K562 (cell line): ENCODE measurements at regions of chr7 and their contacts with region 1.

Region 1: GRCh38 chr7:31488562-31489203 is 25.2 kb upstream of the ITPRID1 start:
- DNase-seq: peak; percentile 74 to 88 (median 82)
- ATAC-seq: peak; percentile 99
- H3K4me3 ChIP-seq: no peak overlapping the region
- H3K27ac ChIP-seq: no peak overlapping the region
- H3K4me1 ChIP-seq: no peaks in the 10 kb centered on the region
- H3K27me3 ChIP-seq: no peaks in the 10 kb centered on the region
- CTCF ChIP-seq: peak; percentile 81 to 91 (median 84)
- EP300 ChIP-seq: no peak
- POLR2A ChIP-seq: no peak
- RAD21 ChIP-seq: peak; percentile 45 to 72

Region 2: DNA sequence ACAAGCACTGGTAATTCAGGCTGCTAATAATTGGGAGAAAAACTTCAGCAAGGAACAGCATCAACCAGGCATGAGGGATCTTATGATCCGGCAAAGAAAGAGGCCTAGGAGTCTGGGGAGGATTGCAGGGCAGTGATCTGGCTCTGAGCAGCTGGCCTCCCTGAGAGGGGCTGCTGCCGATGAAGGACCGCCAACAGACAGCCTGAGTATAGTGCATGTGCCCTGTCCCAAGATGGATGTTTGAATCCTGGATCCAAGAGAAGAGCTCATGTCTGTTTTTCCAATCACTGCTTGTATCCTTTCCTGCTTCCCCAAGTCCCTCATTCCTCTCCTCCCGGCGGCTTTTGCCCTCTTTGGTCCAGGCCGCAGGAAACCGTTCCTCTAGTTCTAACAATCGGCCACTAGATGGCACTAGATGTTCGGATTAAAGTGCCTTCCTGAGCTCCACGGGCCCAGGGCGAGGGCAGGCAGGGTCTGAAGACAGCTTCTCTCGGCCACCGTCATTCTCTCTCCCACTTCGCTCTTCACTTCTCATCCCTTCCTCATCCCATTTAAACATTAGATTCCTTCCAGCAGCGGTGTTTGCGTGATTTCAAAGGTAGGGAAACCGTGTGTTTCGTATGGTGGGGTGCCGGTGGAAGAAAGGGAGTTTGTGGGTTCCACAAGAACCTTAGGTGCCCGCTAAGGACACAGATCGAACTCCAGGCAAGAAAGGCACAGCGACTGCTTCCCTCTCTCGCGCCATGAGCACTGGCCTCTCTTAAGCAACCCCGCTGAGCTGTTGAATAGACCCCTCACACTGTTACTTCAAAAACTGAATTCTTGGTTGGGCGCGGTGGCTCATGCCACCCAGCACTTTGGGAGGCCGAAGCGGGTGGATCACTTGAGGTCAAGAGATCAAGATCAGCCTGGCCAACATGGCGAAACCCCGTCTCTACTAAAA is 354.2 kb before region 1 on chr7:
- CTCF ChIA-PET with region 1: interaction called, 10 read pairs
- POLR2A ChIA-PET with region 1: no interaction called
- in situ Hi-C with region 1: loop called (anchors 25 kb)
- intact Hi-C with region 1: loop called (anchors 2 kb)
- DNase-seq: peak; percentile 69 to 82 (median 74)
- ATAC-seq: peak; percentile 99
- H3K4me3 ChIP-seq: no peak overlapping the region
- H3K27ac ChIP-seq: no peak overlapping the region
- H3K4me1 ChIP-seq: no peaks in the 10 kb centered on the region
- H3K27me3 ChIP-seq: peaks cover 0 to 4% of the 10 kb centered on the region in 2 experiments; a peak in 3 of 5 replicates
- CTCF ChIP-seq: peak; percentile 69 to 80 (median 78)
- EP300 ChIP-seq: no peak
- POLR2A ChIP-seq: no peak
- RAD21 ChIP-seq: peak; percentile 51 to 76

Region 3: DNA sequence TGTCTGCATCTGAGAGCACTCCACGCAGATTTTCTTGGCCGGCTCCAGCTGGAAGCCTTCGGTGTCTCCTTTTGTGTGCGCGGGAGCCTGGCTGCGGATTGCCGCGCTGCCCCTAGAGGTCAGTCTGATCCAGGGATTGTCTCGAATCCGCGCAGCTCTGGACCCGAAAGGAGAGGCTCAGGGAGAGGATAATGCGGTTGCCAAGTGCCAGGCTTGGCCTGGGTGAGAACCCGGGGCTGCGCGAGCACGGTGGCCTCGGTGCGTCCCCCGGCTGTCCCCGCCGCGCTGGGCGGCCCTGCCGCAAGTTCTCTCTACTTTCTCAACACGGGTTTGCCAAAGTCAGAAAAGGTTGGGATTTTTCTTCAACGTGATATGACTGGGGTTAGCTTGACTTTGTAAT is 295.7 kb before region 1 on chr7:
- CTCF ChIA-PET with region 1: no interaction called
- POLR2A ChIA-PET with region 1: no interaction called
- in situ Hi-C with region 1: no loop called
- intact Hi-C with region 1: loop called (anchors 2 kb)
- DNase-seq: peak; percentile 53 to 63 (median 59)
- ATAC-seq: peak; percentile 100
- H3K4me3 ChIP-seq: no peak overlapping the region
- H3K27ac ChIP-seq: no peak overlapping the region
- H3K4me1 ChIP-seq: peaks cover 0 to 4% of the 10 kb centered on the region in 2 experiments; a peak in 1 of 5 replicates
- H3K27me3 ChIP-seq: no peaks in the 10 kb centered on the region
- CTCF ChIP-seq: peak; percentile 77 to 81 (median 81)
- EP300 ChIP-seq: no peak
- POLR2A ChIP-seq: no peak
- RAD21 ChIP-seq: peak; percentile 18 to 67; a peak in 3 of 4 replicates

Region 4: GRCh38 chr7:31340603-31341002 is 148.1 kb before region 1 on chr7 and contains the start of gene NEUROD6:
- CTCF ChIA-PET with region 1: no interaction called
- POLR2A ChIA-PET with region 1: no interaction called
- in situ Hi-C with region 1: no loop called
- intact Hi-C with region 1: no loop called
- DNase-seq: no peak
- ATAC-seq: no peak
- H3K4me3 ChIP-seq: no peak within 1 kb of the TSS
- H3K27ac ChIP-seq: no peak within 1 kb of the TSS
- H3K4me1 ChIP-seq: peaks cover 0 to 8% of the 10 kb centered on the region in 2 experiments; a peak in 1 of 5 replicates
- H3K27me3 ChIP-seq: peaks cover 2 to 22% of the 10 kb centered on the region in 2 experiments; a peak in 2 of 5 replicates
- CTCF ChIP-seq: no peak
- EP300 ChIP-seq: no peak
- POLR2A ChIP-seq: no peak
- RAD21 ChIP-seq: no peak
- polyA plus RNA-seq, gene NEUROD6: not detected

Region 5: DNA sequence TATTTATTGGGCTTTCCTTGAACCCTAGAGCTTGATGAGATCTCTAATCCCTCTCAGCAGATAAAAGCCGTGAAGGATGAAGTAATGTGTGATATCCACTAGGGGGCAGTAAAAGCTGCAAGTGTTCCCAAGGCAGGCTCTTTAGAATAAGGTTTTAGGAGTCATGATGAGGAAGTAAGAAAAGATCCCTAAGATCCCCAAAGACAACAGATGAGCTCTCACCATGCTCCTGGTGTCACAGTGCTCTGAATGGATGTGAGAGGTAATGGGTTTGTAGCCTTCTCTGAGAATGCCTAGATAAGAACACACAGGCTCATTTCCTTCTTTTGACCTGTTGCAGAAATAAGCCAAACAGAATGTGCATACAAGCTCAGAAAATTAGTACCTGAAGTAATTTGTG is 45.2 kb before region 1 on chr7:
- CTCF ChIA-PET with region 1: no interaction called
- POLR2A ChIA-PET with region 1: no interaction called
- in situ Hi-C with region 1: no loop called
- intact Hi-C with region 1: loop called (anchors 1 kb)
- DNase-seq: peak; percentile 53 to 63 (median 57)
- ATAC-seq: peak; percentile 89
- H3K4me3 ChIP-seq: no peak overlapping the region
- H3K27ac ChIP-seq: no peak overlapping the region
- H3K4me1 ChIP-seq: no peaks in the 10 kb centered on the region
- H3K27me3 ChIP-seq: no peaks in the 10 kb centered on the region
- CTCF ChIP-seq: peak; percentile 58 to 78 (median 76); a peak in 5 of 6 replicates
- EP300 ChIP-seq: no peak
- POLR2A ChIP-seq: no peak
- RAD21 ChIP-seq: peak; percentile 54 to 67

Region 6: DNA sequence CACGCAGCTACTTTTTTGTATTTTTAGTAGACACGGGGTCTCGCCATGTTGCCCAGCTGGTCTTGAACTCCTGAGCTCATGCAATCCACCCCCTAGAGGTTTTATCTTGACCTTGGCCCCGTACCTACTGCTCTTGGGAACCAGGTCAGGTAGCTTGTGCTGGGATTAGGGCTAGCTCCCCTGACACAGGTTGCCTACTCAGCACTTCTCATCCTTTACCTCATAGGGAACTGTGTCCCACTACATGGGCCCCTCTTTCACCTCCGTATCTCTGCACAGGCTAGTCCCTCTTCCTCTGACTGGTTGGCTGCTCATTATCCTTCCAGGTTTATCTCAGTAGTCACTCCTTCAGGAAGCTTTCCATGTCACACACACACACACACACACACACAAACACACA is 32.8 kb before region 1 on chr7:
- CTCF ChIA-PET with region 1: no interaction called
- POLR2A ChIA-PET with region 1: no interaction called
- in situ Hi-C with region 1: no loop called
- intact Hi-C with region 1: no loop called
- DNase-seq: no peak
- ATAC-seq: no peak
- H3K4me3 ChIP-seq: no peak overlapping the region
- H3K27ac ChIP-seq: no peak overlapping the region
- H3K4me1 ChIP-seq: no peaks in the 10 kb centered on the region
- H3K27me3 ChIP-seq: no peaks in the 10 kb centered on the region
- CTCF ChIP-seq: no peak
- EP300 ChIP-seq: no peak
- POLR2A ChIP-seq: no peak
- RAD21 ChIP-seq: no peak

Region 7: GRCh38 chr7:31663072-31663471 is 174.4 kb after region 1 on chr7:
- CTCF ChIA-PET with region 1: no interaction called
- POLR2A ChIA-PET with region 1: no interaction called
- in situ Hi-C with region 1: no loop called
- intact Hi-C with region 1: no loop called
- DNase-seq: peak in 1 of 4 experiments; percentile 2
- ATAC-seq: peak; percentile 53; the same call in 2 of the 3 replicates
- H3K4me3 ChIP-seq: no peak overlapping the region
- H3K27ac ChIP-seq: no peak overlapping the region
- H3K4me1 ChIP-seq: no peaks in the 10 kb centered on the region
- H3K27me3 ChIP-seq: no peaks in the 10 kb centered on the region
- CTCF ChIP-seq: peak in 1 of 3 experiments; percentile 51; a peak in 2 of 6 replicates
- EP300 ChIP-seq: no peak
- POLR2A ChIP-seq: no peak
- RAD21 ChIP-seq: no peak